ENCODE measurements at regions of chr2 and their contacts with region 1.

Region 1: DNA sequence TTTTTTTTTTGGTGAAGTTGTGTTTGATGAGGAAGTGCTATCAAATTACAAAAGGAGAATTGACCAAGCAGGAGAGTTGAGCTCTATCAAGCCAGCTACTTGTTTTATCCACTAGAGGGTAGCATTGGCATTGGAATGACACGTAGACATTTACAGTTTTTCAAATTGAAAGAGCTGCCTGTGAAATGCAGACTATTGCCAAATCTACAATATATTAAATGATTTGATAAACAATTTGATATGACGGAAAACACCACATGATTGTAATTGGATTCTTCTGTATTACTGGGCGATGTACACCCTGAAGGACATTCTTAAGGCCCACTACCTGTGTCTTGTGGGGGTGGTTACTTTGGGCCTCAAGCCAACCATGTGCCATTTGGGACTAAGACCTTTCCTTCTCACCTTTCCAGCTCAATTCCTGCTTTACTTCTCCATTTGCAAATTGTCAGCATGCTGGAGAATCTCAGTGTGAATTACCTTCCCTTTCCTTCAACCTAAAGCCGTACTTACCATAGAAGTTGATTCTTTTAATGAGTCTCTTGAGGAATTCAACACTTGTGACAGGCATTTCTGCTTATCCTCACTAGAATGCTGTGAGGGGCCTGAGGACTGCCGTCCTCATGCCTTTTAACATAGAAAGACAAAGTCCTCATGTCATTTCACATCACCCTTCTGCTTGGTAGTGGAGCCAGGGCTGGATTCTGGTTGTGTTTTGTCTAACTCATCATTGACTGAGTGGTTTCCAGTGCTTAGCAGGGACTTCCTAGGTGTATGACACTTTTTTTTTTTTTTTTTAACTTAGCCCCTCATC is 134.8 kb upstream of the THUMPD2 start:
- DNase-seq: peak; percentile 61
- ATAC-seq: peak; percentile 78
- H3K4me3 ChIP-seq: no peak overlapping the region
- H3K27ac ChIP-seq: no peak overlapping the region
- H3K4me1 ChIP-seq: no peaks in the 10 kb centered on the region
- H3K27me3 ChIP-seq: 0 out of 2 replicates have a peak, but pooled peaks cover 2% of the 10 kb centered on the region
- CTCF ChIP-seq: peak; percentile 74

Region 2: DNA sequence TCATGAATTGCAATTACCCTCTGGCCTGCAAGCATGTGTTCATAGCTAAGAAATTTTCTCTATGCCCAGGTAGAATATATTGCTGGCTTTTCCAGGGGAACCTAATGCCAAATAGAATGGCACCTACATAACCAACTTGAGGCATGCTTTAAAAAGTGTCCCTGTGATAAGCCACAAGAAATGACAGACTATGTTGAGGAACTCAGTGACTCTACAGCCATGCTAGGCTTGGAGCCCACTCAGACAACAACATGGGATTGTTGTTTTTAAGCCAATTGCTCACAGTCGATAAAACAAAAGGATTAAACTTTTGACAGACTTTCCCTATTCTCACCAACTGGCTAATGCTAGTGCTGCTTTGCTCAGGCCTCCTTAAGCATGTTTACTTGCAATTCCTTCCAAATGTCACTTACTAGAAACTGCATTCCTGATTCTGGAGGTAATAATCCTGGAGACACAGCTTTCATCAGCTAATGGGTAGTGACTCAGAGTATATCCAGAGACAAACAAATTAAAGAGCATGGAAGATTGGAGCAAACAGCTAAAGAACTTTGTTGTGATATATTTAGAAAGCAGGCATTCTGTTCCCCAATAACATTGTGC is 289.0 kb after region 1 on chr2:
- CTCF ChIA-PET with region 1: no interaction called
- POLR2A ChIA-PET with region 1: no interaction called
- in situ Hi-C with region 1: no loop called
- intact Hi-C with region 1: no loop called
- DNase-seq: no peak
- ATAC-seq: no peak
- H3K4me3 ChIP-seq: no peak overlapping the region
- H3K27ac ChIP-seq: no peak overlapping the region
- H3K4me1 ChIP-seq: no peaks in the 10 kb centered on the region
- H3K27me3 ChIP-seq: no peaks in the 10 kb centered on the region
- CTCF ChIP-seq: no peak

Region 3: GRCh38 chr2:40554668-40555285 is 640.9 kb after region 1 on chr2:
- CTCF ChIA-PET with region 1: interaction called, 3 read pairs
- POLR2A ChIA-PET with region 1: no interaction called
- in situ Hi-C with region 1: no loop called
- intact Hi-C with region 1: loop called (anchors 5 kb)
- DNase-seq: peak; percentile 56
- ATAC-seq: peak; percentile 80; the same call in 1 of the 2 replicates
- H3K4me3 ChIP-seq: no peak overlapping the region
- H3K27ac ChIP-seq: no peak overlapping the region
- H3K4me1 ChIP-seq: no peaks in the 10 kb centered on the region
- H3K27me3 ChIP-seq: no peaks in the 10 kb centered on the region; the same call in 1 of the 2 replicates
- CTCF ChIP-seq: peak; percentile 84

Region 4: GRCh38 chr2:41782306-41783158 is 1868.7 kb after region 1 on chr2:
- CTCF ChIA-PET with region 1: no interaction called
- POLR2A ChIA-PET with region 1: no interaction called
- in situ Hi-C with region 1: no loop called
- intact Hi-C with region 1: loop called (anchors 5 kb)
- DNase-seq: peak; percentile 33
- ATAC-seq: no peak
- H3K4me3 ChIP-seq: no peak overlapping the region
- H3K27ac ChIP-seq: no peak overlapping the region
- H3K4me1 ChIP-seq: no peaks in the 10 kb centered on the region
- H3K27me3 ChIP-seq: peaks cover 5% of the 10 kb centered on the region; the same call in 1 of the 2 replicates
- CTCF ChIP-seq: peak; percentile 81

Measured in Panc1 (cell line).